ENCODE measurements at regions of chr14 and their contacts with region 1.

Region 1: DNA sequence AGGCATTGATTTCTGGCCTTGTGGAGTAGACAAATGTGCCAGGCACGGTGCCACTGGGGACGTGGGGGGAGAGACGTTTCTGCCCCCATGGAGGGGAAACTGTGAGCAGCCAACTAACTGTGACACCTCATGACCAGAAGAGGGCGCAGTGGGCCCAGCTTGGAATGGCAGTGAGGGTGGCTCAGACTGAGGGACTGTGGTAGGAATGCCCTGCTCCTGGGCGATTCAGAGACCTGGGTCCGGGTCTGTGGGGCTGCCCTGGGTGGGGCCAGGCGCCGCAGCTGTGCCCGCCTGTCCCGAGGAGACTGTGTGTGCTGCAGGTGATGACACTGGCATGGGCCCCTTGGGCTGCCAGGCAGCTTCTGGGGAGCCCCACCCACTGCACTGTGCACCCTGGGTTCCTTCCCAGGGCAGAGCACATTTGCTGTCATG is 60.6 kb downstream of the SLC25A47 start:
- DNase-seq: peak; percentile 77

Region 2: GRCh38 chr14:100393906-100394732 is 10.4 kb after region 1 on chr14:
- CTCF ChIA-PET with region 1: interaction called, 11 read pairs
- POLR2A ChIA-PET with region 1: no interaction called
- DNase-seq: no peak

Region 3: DNA sequence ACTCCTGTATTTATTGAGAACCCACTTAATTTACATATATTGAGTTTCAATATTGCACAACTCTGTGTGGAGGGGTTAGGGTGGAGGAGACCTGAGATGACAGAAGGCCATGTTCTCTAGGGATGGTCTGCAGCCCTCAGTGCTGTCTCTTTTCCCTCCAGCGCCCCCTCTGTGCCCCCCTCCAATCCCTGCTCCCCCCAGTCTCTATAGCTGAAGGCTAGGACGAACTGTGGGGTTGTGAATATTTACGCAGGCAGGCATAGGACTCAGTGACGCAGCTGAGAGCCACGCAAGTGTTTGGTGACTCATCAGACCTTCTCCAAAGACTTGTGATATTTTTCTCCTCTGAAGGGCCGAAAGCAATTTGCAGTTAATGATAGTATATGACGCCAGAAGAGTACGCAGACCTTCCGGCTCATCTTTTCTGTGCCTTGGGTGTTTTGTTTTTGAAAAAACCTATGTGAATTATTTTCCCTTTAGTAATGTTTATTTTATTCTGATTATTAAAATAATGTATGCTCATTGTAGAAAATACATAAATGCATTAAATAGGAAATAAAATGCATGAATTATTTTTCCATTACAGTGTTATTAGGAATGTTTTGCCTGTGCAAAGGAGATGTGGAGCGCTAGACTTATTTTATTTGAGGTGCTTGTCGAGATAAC is 24.7 kb after region 1 on chr14:
- CTCF ChIA-PET with region 1: interaction called, 13 read pairs
- POLR2A ChIA-PET with region 1: interaction called, 3 read pairs
- DNase-seq: no peak

Region 4: GRCh38 chr14:100417466-100417865 is 33.7 kb after region 1 on chr14:
- CTCF ChIA-PET with region 1: interaction called, 14 read pairs
- POLR2A ChIA-PET with region 1: interaction called, 3 read pairs
- DNase-seq: peak; percentile 58

Region 5: DNA sequence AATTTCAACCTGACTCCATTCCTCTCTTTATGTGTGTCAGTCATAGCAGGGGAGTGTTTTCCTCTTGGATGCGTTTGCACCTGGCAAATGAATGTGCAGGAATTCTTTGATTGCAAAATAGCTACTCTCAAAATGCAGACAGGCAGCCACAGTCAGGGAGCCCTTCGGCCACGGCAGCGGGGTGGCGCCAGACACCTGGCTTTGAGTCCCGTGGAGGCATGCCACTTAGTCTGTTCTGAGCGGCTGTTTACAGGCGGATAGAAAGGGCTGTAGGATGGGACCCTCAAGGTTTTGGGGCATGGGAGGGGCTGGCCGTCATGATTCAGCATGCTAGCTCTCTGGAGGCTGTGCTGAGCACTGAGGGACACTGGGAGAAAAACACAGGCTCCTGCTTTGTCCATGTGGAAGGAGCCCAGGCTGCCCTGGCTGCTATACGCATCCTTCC is 56.5 kb after region 1 on chr14:
- CTCF ChIA-PET with region 1: interaction called, 16 read pairs
- POLR2A ChIA-PET with region 1: interaction called, 4 read pairs
- DNase-seq: peak; percentile 68

Region 6: GRCh38 chr14:100645192-100645990 is 261.6 kb after region 1 on chr14:
- CTCF ChIA-PET with region 1: interaction called, 56 read pairs
- POLR2A ChIA-PET with region 1: interaction called, 4 read pairs
- DNase-seq: peak; percentile 88

Region 7: DNA sequence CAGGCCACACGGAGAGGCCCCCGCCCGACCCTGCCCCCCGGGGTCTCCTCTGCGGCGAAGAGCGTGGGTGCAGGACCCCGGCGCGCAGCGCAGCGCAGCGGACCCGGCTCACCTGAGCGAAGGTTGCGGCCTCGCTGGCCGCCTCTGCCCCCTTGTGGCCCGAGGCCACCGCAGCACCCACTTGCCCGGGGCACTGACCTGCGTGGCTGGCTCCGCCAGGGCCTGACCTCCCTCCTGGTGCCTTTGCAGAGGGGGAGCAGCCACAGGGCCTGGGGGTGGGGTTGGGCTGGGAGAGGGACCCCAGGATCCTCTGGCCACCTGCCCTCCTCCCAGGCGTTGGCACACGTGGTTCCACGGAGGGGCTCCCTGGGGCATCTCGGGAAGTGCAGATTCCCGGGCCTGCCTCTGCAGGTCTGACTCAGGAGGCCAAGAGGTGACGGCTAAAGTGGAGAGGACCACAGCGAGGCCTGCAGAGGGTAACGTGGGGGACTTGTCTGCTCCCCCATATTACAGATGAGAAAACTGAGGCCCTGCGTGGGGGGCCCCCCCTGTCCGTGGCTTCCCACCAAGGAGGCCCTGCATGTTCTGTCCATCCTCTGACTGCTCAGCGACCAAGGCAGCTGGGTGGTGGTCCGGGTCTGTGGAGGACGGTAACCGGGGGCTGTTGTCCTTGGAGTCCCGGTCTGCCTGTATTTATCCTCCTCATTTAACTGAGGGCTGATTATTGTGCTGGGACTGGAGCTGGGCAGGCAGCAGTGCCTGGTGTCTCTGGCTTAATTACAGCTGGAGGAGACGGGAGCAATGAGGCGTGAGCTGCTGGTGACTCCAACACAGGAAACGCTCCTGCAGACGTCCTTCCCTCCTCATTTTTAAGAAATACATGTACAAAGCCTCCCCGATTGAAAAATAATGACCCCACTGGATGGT is 271.3 kb after region 1 on chr14:
- CTCF ChIA-PET with region 1: interaction called, 39 read pairs
- POLR2A ChIA-PET with region 1: no interaction called
- DNase-seq: peak; percentile 59

Region 8: DNA sequence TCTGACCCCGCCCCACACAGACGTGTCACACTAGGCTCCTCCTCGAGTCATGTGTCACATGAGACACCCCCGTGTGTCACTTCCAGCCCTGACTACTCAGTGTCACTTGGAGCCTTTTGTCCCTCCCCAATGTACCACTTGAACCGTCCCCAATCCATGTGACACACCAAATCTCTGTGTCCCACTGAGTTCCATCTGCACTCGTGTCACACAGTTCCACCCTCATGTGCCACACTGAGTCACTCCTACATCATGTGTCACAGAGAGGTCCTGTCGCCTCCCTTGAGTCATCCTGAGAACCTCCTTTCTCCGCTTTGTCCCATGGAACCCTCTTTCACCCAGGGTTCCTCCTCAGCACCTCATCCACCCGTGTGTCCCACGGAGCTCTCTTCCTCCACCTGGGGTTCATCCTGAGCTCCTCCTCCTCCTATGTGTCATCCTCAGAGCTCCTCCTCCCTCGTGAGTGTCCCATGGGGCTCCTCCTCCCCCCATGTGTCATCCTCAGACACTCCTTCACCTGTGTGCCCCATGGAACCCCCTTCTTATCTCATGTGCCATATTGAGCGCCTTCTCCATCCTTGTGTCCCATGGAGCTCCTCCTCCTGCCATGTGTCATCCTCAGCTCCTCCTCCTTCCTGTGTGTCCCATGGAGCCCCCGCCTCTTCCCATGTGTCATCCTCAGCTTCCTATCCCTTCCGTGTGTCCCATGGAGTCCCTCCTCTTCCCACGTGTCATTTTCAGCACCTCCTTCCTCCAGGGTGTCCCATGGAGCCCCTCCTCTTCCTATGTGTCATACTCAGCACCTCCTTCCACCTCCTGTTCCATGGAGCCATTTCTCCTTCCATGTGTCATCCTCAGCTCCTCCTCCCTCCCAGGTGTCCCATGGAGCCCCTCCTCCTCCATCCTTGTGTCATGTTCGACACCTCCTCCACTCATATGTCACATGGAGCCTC is 487.8 kb after region 1 on chr14:
- CTCF ChIA-PET with region 1: no interaction called
- POLR2A ChIA-PET with region 1: no interaction called
- DNase-seq: no peak